ENCODE measurements at regions of chrX and their contacts with region 1.

Region 1: DNA sequence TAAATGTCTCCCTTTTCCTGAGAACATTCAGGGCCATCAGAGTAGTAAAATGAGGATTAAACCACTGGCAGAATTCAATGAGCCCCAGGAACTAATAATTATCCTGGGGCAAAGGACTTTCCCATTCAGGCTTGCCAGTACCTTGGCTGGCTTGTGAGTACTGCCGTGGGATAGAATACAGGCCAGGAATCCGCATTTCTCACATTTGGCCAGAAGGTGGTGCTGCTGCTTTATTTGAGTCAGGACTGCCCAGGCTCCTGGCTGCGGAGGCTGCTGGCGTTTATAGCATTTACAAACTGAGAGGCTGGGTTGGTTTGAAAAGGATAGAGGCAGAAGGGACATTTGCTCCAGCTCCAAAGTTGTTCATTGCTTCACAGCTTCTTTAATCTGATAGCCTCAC is 91.4 kb downstream of the RTL9 start:
- DNase-seq: peak; percentile 42
- ATAC-seq: peak; percentile 94
- H3K4me3 ChIP-seq: no peak overlapping the region
- H3K27ac ChIP-seq: no peak overlapping the region
- H3K4me1 ChIP-seq: no peaks in the 10 kb centered on the region
- H3K27me3 ChIP-seq: peaks cover 0 to 1% of the 10 kb centered on the region in 2 experiments; a peak in 1 of 5 replicates
- CTCF ChIP-seq: peak; percentile 79
- EP300 ChIP-seq: no peak
- POLR2A ChIP-seq: no peak
- RAD21 ChIP-seq: peak; percentile 42; the same call in 1 of the 2 replicates

Region 2: DNA sequence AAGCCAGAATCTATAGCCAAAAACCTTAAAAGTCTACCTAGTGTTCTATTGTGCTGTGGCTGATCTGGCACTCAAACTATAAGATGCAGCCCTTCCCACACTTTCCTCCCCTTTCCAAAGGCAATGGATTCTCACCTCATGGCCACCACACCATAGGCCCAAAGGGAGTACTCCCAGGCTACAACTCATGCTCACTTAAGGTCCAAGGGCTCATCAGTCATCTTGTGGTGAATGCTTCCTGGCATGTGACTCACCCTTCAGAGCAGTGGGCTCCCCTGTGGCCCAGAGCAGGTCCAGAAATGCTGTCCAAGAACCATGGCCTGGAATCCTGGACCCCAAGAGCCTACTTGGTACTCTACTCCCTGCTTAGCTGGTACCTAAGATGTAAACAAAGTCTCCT is 164.5 kb after region 1 on chrX:
- CTCF ChIA-PET with region 1: no interaction called
- POLR2A ChIA-PET with region 1: no interaction called
- in situ Hi-C with region 1: no loop called
- intact Hi-C with region 1: no loop called
- DNase-seq: no peak
- ATAC-seq: no peak
- H3K4me3 ChIP-seq: no peak overlapping the region
- H3K27ac ChIP-seq: no peak overlapping the region
- H3K4me1 ChIP-seq: no peaks in the 10 kb centered on the region
- H3K27me3 ChIP-seq: no peaks in the 10 kb centered on the region
- CTCF ChIP-seq: no peak
- EP300 ChIP-seq: no peak
- POLR2A ChIP-seq: no peak
- RAD21 ChIP-seq: no peak

Region 3: DNA sequence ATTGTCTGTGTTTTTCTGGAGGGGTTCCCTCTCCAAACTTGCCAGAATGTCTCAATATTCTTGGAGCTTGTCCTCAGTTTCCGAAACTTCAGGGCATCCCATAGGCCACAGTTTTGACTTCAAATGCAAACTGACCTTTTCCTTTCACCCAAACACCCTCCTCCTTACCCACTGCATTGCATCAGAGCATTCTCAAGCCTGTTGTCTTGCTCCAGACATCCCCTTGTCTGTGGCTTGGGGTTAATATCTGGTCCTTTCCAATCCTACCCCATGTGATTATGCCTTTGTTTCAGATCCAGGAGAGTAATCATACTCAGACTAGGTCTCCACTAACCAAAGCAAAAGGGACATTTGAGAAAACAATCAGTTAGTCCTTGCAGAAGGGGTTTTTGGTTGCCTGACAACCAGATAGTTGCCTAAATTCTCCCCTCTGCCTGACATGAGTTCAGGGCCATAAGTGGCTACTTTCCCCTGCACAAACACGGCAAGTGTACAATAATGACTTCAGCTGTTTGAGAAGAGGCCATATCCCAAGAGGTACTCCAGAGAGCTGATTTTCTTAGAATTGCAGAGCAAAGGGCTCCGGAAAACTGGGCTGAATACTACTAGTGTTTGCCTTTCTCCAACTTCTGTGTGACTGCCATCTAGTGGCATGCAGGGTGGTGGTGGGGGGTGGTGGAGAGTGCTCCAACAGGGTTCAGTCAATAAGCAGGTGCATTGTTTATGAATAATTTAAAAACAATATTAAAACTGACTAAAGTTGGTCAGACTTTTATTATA is 215.4 kb after region 1 on chrX:
- CTCF ChIA-PET with region 1: interaction called, 4 read pairs
- POLR2A ChIA-PET with region 1: no interaction called
- in situ Hi-C with region 1: no loop called
- intact Hi-C with region 1: loop called (anchors 1 kb)
- DNase-seq: peak; percentile 7
- ATAC-seq: peak; percentile 86
- H3K4me3 ChIP-seq: no peak overlapping the region
- H3K27ac ChIP-seq: no peak overlapping the region
- H3K4me1 ChIP-seq: peaks cover 5% of the 10 kb centered on the region; the same call in 1 of the 2 replicates
- H3K27me3 ChIP-seq: no peaks in the 10 kb centered on the region
- CTCF ChIP-seq: peak; percentile 57
- EP300 ChIP-seq: no peak
- POLR2A ChIP-seq: no peak
- RAD21 ChIP-seq: no peak

Region 4: DNA sequence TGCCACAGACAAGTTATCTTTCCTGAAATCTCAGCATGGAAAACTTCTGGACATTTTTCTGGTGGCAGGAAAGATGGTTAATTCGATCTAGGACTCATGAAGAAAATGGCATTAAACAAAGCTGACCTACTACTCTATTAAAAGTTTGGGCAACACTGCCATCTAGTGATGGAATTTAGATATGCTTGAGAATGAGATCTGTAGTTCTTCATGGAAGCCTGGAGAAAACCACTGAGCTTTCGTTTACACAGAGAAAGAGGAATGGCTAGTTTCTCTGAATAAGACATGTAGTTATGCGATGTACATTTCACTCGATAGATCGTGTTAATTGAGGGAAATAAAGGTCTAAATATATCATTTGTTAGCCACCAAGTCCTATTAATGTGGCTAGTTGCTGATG is 397.3 kb after region 1 on chrX:
- CTCF ChIA-PET with region 1: interaction called, 5 read pairs
- POLR2A ChIA-PET with region 1: no interaction called
- in situ Hi-C with region 1: loop called (anchors 10 kb)
- intact Hi-C with region 1: loop called (anchors 2 kb)
- DNase-seq: peak; percentile 32
- ATAC-seq: peak; percentile 64
- H3K4me3 ChIP-seq: no peak overlapping the region
- H3K27ac ChIP-seq: no peak overlapping the region
- H3K4me1 ChIP-seq: no peaks in the 10 kb centered on the region
- H3K27me3 ChIP-seq: no peaks in the 10 kb centered on the region
- CTCF ChIP-seq: peak; percentile 52
- EP300 ChIP-seq: no peak
- POLR2A ChIP-seq: no peak
- RAD21 ChIP-seq: no peak